ENCODE measurements at regions of chr12 and their contacts with region 1.

Region 1: DNA sequence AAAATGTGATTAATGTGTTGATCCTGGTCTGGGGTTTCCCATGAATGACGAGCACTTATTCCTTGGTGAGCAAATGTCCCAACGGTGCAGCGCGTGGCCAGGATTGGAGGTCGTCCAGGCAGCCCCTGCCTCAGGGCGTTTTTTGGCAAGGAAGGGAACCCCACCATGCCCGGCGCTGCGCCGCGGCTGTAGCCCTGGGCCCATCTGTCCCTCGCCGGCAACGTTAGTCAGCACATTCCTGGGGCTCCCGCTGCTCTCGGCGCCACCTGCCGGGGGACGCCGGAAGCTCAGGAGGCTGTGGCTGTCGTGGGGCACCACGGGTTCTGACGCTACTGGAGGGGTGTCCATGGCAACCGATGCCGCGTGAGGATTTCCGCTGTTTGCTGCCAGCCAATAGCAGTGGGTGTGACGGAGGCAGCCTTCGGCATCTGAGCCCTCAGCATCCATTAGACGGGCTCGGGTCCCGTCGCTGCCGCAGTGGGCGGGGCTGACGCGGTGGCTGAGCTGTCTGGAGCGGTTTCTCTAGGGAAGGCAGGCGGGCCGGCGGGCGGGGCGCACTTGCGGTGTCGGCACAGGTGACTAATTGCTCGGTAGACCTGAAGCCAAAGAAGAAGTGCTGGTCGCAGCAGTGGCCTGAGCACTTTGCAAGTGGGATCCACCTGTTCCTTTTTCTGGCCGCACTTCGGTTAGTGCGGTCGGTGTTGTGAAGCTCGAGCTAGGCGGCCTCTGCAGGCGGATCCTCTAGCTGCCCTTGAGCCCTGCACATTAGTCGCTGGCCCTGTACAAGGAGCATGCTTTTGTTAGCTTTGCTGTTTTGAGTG is 29.5 kb downstream of the RAB35 start:
- DNase-seq: peak; percentile 99 to 100
- ATAC-seq: peak; percentile 92 to 96 (median 92)
- H3K4me3 ChIP-seq: peak overlapping the region; percentile 19
- H3K4me3 Mint-ChIP-seq: peak overlapping the region; percentile 85
- H3K27ac ChIP-seq: peak overlapping the region; percentile 57
- H3K27ac Mint-ChIP-seq: peak overlapping the region; percentile 92 to 94
- H3K4me1 ChIP-seq: peaks cover 14% of the 10 kb centered on the region
- H3K4me1 Mint-ChIP-seq: peaks cover 21 to 22% of the 10 kb centered on the region in 2 donors
- H3K27me3 ChIP-seq: no peaks in the 10 kb centered on the region
- H3K27me3 Mint-ChIP-seq: no peaks in the 10 kb centered on the region
- CTCF ChIP-seq: peak; percentile 88

Region 2: GRCh38 chr12:119988782-119989668 is 98.0 kb before region 1 on chr12 and contains the start of gene BICDL1:
- intact Hi-C with region 1: loop called (anchors 1 kb)
- DNase-seq: peak; percentile 79 to 100
- ATAC-seq: peak; percentile 75 to 90 (median 77)
- H3K4me3 ChIP-seq: peak within 1 kb of the TSS; percentile 43
- H3K4me3 Mint-ChIP-seq: peak within 1 kb of the TSS; percentile 86
- H3K27ac ChIP-seq: peak within 1 kb of the TSS; percentile 64
- H3K27ac Mint-ChIP-seq: peak within 1 kb of the TSS; percentile 68 to 83
- H3K4me1 ChIP-seq: peaks cover 18% of the 10 kb centered on the region
- H3K4me1 Mint-ChIP-seq: peaks cover 6 to 15% of the 10 kb centered on the region in 2 donors
- H3K27me3 ChIP-seq: no peaks in the 10 kb centered on the region
- H3K27me3 Mint-ChIP-seq: peaks cover under 1 to 2% of the 10 kb centered on the region in 2 donors
- CTCF ChIP-seq: no peak
- total RNA-seq, gene BICDL1: 29.3 to 37.1 (median 34.3) TPM